IMR-90 (cell line): ENCODE measurements at regions of chr1 and their contacts with region 1.

Region 1: GRCh38 chr1:212608209-212608955 is at the start of gene ATF3:
- DNase-seq: peak; percentile 99
- ATAC-seq: peak; percentile 91
- H3K4me3 ChIP-seq: peak within 1 kb of the TSS; percentile 77
- H3K27ac ChIP-seq: peak within 1 kb of the TSS; percentile 78
- H3K4me1 ChIP-seq: peaks cover 14% of the 10 kb centered on the region
- H3K27me3 ChIP-seq: peaks cover 42% of the 10 kb centered on the region
- CTCF ChIP-seq: no peak
- POLR2A ChIP-seq: peak; percentile 99
- RAD21 ChIP-seq: 0 out of 2 replicates have a peak, but pooled peaks have one; percentile 10
- total RNA-seq, gene ATF3: 9.9 and 15.0 TPM in 2 replicates

Region 2: GRCh38 chr1:212477014-212477679 is 131.2 kb before region 1 on chr1:
- CTCF ChIA-PET with region 1: interaction called, 12 read pairs
- POLR2A ChIA-PET with region 1: interaction called, 5 read pairs
- dilution Hi-C with region 1: no loop called
- in situ Hi-C with region 1: no loop called
- intact Hi-C with region 1: loop called (anchors 1 kb)
- DNase-seq: peak; percentile 86
- ATAC-seq: peak; percentile 98
- H3K4me3 ChIP-seq: no peak overlapping the region
- H3K27ac ChIP-seq: no peak overlapping the region
- H3K4me1 ChIP-seq: peaks cover 3% of the 10 kb centered on the region
- H3K27me3 ChIP-seq: peaks cover 4% of the 10 kb centered on the region; the same call in 1 of the 2 replicates
- CTCF ChIP-seq: peak; percentile 95
- POLR2A ChIP-seq: peak; percentile 56
- RAD21 ChIP-seq: peak; percentile 97

Region 3: DNA sequence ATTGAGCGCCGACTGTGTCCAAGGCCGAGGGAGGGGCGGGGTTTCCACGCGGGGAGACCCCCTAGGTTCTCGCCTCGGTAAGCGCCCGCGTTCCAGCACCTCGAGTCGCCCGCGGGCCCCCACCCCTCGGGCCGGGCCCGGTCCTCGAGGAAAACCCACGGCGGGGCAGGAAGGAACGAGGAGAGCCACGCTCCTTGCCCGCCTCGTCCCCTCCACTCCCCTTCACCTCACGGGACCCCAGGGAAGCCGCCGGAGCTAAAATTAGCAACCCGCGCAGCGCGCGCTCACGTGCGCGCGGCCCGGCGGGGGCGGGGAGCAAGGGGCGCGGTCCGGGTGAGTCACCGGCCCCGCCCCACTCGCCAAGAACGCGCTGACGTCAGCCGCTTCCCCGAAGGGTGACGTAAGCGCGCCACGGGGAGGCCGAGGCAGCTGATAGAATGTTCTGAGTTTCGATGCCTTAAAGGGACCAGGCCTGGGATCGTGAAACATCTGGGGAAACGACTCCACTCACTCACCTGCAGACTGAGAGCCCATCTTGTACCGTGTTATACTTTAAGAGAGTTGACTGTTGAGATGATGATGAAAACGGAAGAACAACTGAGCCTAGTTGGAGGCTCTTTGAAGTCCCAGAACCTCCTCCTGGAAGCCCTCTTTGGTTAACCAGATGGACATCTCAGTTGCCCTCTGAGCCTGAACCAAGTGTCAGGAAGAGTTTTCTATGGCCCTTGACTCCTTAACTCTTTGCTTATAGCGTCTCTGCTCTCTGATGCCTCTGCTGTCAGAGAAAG is 49.5 kb before region 1 on chr1:
- CTCF ChIA-PET with region 1: no interaction called
- POLR2A ChIA-PET with region 1: no interaction called
- dilution Hi-C with region 1: no loop called
- in situ Hi-C with region 1: no loop called
- intact Hi-C with region 1: loop called (anchors 2 kb)
- DNase-seq: peak; percentile 93
- ATAC-seq: peak; percentile 87
- H3K4me3 ChIP-seq: peak overlapping the region; percentile 56
- H3K27ac ChIP-seq: peak overlapping the region; percentile 73
- H3K4me1 ChIP-seq: peaks cover 9% of the 10 kb centered on the region
- H3K27me3 ChIP-seq: no peaks in the 10 kb centered on the region
- CTCF ChIP-seq: 0 out of 2 replicates have a peak, but pooled peaks have one; percentile 3
- POLR2A ChIP-seq: peak; percentile 63; the same call in 1 of the 2 replicates
- RAD21 ChIP-seq: peak; percentile 8; the same call in 1 of the 2 replicates

Region 4: DNA sequence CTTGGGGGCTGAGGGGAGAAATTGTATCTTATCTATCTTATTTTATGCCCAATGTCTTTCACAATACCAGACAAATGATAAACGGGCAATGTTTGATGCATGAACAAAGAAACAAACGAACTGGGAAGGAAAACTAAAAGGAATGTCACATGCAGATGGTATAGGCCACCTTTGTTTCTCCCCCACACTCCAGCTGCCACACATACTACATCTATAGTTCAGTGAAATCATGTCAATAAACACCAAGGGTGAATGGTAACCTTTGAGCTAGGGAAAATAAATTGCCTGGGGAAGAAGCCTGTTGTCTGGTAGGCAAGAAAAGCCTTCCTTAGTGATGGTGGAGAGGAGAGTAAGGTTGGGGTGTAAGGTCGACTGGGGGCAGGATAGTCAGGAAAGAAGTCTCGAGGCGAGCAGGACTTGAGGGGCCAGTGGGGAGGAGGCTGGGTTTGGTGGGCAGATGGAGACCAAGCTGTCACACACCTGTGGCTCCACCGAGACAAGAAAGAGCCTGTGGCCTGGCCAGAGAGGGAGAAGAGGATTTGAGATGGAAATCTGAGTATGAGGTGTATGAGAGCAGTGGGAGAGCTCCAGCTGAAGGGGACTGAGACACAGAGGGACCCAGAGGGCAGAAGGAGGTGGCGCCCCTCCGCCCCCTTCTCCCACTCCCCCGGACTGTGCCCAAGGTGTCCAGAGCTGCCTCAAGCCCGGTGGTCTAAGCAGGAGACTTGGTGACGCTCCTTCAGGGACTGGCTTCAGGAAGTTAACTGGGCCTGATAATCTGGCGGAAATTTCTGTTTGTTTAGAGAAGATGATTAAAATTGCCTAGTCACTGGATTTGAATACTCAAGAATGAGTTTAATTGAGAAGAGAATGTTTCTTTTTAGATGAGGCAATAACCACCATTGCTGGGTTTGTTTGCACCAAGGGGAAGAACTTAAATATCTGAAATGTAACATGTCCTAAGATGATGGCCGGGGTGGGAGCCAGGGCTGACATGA is 37.5 kb after region 1 on chr1:
- CTCF ChIA-PET with region 1: no interaction called
- POLR2A ChIA-PET with region 1: no interaction called
- dilution Hi-C with region 1: no loop called
- in situ Hi-C with region 1: no loop called
- intact Hi-C with region 1: loop called (anchors 5 kb)
- DNase-seq: no peak
- ATAC-seq: no peak
- H3K4me3 ChIP-seq: no peak overlapping the region
- H3K27ac ChIP-seq: peak overlapping the region; percentile 53; the same call in 1 of the 2 replicates
- H3K4me1 ChIP-seq: peaks cover 15% of the 10 kb centered on the region
- H3K27me3 ChIP-seq: no peaks in the 10 kb centered on the region
- CTCF ChIP-seq: no peak
- POLR2A ChIP-seq: no peak
- RAD21 ChIP-seq: no peak

Region 5: DNA sequence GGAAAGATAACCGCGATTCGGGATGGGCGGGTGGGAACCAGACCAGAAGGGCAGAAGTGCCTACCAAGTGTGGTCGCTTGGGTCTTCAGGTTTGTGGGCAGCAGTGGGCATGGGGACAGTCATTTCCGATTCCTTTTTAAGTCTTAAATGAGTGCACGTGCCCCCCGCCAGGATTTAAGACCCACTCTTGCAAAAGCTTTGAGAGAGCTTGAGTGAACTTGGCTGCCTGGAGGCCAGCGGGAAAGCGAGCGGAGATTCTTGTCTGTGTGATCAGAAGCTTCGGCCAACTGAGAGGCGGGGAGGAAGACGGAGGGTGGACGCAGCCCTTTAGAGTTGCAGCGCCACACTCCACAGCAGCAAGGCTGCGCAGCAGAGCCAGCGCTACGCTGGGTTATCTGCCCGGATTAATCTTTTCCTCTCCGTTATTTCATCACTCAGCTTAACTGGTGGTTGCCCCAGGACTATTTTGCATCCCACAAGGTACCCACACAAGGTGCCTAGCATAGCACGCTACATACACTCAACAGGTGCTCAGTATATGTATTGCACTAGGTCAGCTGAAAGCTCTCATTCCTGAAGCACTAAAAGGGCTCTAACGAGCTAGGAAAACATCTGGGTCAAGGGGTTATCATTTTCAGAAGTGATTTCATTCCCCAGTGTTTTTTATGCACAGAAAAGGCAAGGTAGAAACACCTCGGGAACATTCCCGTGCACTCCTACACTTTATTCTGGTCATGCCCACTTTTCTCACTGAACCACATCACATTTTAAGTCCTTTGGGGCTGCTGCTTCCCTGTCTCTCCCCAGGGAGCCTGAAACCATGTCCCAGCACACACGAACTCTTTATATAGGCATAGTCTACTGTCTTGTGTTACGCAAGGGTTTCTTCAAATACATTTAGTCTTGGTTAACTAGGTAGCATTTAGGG is 92.8 kb after region 1 on chr1:
- CTCF ChIA-PET with region 1: interaction called, 4 read pairs
- POLR2A ChIA-PET with region 1: no interaction called
- dilution Hi-C with region 1: no loop called
- in situ Hi-C with region 1: no loop called
- intact Hi-C with region 1: loop called (anchors 5 kb)
- DNase-seq: peak; percentile 62
- ATAC-seq: peak; percentile 67
- H3K4me3 ChIP-seq: peak overlapping the region; percentile 73
- H3K27ac ChIP-seq: no peak overlapping the region; the same call in 1 of the 2 replicates
- H3K4me1 ChIP-seq: peaks cover 3% of the 10 kb centered on the region; the same call in 1 of the 2 replicates
- H3K27me3 ChIP-seq: no peaks in the 10 kb centered on the region
- CTCF ChIP-seq: 0 out of 2 replicates have a peak, but pooled peaks have one; percentile 20
- POLR2A ChIP-seq: no peak
- RAD21 ChIP-seq: peak; percentile 21; the same call in 1 of the 2 replicates

Region 6: DNA sequence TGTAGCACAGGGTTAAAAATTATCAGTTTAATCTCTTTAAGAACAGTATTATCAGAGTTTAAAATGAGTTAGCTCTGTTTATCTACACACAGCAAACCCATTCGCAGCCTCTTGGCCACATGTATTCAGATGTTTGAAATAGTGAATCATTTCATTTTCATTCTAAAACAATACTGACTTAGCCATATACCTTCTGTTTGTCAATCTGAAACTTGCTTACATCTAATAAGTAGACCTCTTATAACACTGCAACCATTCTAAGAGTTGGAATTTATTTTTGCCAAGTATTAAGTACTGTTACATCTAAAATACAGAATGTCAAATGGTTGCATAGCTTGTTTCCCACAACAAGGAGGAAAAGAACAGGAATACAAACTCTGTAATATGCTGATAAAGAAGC is 381.9 kb after region 1 on chr1:
- CTCF ChIA-PET with region 1: no interaction called
- POLR2A ChIA-PET with region 1: no interaction called
- dilution Hi-C with region 1: no loop called
- in situ Hi-C with region 1: no loop called
- intact Hi-C with region 1: loop called (anchors 10 kb)
- DNase-seq: no peak
- ATAC-seq: no peak
- H3K4me3 ChIP-seq: no peak overlapping the region
- H3K27ac ChIP-seq: no peak overlapping the region
- H3K4me1 ChIP-seq: peaks cover 6% of the 10 kb centered on the region
- H3K27me3 ChIP-seq: no peaks in the 10 kb centered on the region
- CTCF ChIP-seq: no peak
- POLR2A ChIP-seq: no peak
- RAD21 ChIP-seq: no peak